Heart right ventricle (tissue), 16 donors: ENCODE measurements at regions of chr14 and their contacts with region 1.

Region 1: DNA sequence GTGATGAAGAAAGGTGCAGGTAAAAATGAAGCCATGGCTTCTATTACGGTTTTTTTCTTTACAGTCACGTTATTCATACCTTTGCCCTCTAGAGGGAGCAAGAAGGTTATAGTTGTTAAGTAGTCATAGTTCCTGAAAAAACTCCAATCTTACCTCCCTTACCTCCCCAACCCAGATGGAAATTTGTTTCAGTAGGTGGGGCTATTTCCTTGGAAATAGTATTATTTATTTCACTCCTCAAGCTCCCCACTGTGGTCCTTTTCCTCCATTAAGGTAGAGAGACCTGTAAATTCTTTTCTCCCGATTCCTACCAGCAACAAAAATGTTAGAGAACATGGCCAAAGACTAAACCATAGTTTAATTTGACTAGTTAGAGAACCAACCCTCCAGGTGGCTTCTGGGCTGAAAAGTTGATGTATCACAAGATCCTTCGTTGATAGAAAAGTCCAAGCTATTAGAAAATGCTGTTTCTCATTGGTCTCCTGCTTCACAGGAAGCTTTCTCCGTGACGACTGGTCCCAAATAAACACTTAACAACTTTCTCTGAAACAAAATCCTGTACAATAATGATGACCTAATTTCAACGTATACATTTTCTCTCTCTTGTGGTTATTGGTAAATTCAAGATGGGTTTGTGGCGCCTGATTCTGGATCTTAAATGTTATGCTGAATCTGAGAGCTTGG is 43.5 kb downstream of the TMX1 start:
- DNase-seq: peak in 1 of 2 donors; percentile 36
- ATAC-seq: peak in 7 of 8 donors; percentile 85 to 90 (median 87)
- H3K4me3 ChIP-seq: no peak overlapping the region
- H3K27ac ChIP-seq: no peak overlapping the region
- H3K4me1 ChIP-seq: no peaks in the 10 kb centered on the region
- H3K27me3 ChIP-seq: no peaks in the 10 kb centered on the region
- CTCF ChIP-seq: peak; percentile 50 to 92 (median 85)

Region 2: GRCh38 chr14:51328064-51328771 is 44.7 kb after region 1 on chr14:
- intact Hi-C with region 1: no loop called
- DNase-seq: peak; percentile 25 to 30
- ATAC-seq: peak in 7 of 8 donors; percentile 52 to 89 (median 58)
- H3K4me3 ChIP-seq: no peak overlapping the region
- H3K27ac ChIP-seq: peak overlapping the region in 9 of 10 donors; percentile 46 to 74 (median 57)
- H3K4me1 ChIP-seq: peaks cover 10 to 25% (median 17%) of the 10 kb centered on the region in 9 donors
- H3K27me3 ChIP-seq: no peaks in the 10 kb centered on the region
- CTCF ChIP-seq: no peak

Region 3: DNA sequence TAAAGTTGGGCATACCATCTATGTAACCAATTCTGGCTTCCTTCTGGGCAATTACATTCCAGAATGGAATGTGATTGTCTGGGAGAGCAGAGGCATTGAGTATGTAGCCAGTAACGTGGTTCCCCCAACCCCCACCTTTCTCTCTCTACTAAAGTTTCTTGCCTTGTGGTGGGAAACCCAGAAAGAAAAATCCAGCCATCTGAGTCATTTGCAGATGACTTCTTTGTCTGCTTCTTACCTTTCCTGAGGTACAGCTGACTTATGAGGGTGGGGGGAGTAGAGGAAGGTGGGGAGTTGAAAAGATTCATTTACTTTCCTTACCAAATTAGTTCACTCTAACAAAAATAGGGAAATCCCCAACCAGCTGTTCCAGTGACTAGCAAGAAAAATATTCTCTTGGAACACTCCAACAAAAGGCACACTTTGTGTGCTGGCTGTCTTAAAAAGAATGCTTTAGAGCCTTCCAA is 256.1 kb after region 1 on chr14:
- intact Hi-C with region 1: loop called in 1 of 10 experiments (anchors 10 kb)
- DNase-seq: no peak
- ATAC-seq: no peak
- H3K4me3 ChIP-seq: no peak overlapping the region
- H3K27ac ChIP-seq: no peak overlapping the region
- H3K4me1 ChIP-seq: peaks cover 0 to 6% (median 0%) of the 10 kb centered on the region in 9 donors
- H3K27me3 ChIP-seq: no peaks in the 10 kb centered on the region
- CTCF ChIP-seq: no peak

Region 4: DNA sequence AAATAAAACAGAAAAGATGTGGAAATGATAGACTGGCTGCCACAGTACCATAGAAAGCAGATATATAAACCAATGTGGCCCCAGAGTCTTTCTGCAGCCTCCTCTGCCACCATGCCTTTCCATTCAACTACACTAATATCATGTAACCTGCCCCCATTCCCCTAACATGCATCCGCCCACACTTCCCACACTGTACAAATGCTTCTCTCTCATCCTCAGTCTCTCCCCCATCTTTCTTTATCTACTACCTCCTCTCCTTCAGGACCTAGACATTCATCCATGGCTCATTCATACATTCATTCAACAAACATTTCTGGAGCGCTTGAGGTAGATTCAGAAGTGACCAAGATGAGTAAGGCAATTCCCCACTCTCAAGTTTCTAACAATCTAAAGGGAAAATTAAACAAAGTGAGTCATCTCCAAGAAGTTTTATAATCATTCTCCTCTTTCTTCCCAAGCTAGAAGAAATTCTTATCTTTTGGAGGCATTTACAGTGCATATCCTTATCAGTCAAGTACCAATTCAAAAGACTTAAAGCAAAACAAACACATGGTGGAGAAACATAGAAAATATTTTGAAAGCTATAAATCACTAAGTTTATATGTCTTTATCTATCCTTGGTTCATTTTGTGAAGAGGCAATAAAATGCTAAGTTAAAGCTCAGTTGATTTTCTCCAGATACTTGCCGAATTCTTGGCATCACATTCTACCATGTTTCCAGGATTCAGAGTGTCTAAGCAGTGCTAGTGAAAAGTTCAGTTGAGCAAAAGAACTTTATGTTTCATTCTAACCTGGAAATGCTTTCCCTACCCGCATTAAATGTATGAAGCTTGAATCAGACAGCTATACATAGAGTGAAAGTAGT is 297.7 kb after region 1 on chr14:
- intact Hi-C with region 1: loop called in 1 of 10 experiments (anchors 10 kb)
- DNase-seq: no peak
- ATAC-seq: no peak
- H3K4me3 ChIP-seq: no peak overlapping the region
- H3K27ac ChIP-seq: no peak overlapping the region
- H3K4me1 ChIP-seq: no peaks in the 10 kb centered on the region
- H3K27me3 ChIP-seq: no peaks in the 10 kb centered on the region
- CTCF ChIP-seq: no peak

Region 5: GRCh38 chr14:51780006-51780692 is 496.6 kb after region 1 on chr14:
- intact Hi-C with region 1: loop called (anchors 1 to 2 kb)
- DNase-seq: peak; percentile 37 to 69
- ATAC-seq: peak; percentile 54 to 81 (median 68)
- H3K4me3 ChIP-seq: no peak overlapping the region
- H3K27ac ChIP-seq: no peak overlapping the region
- H3K4me1 ChIP-seq: peaks cover 0 to 19% (median 7%) of the 10 kb centered on the region in 9 donors
- H3K27me3 ChIP-seq: peaks cover 0 to 6% (median 0%) of the 10 kb centered on the region in 7 donors
- CTCF ChIP-seq: peak; percentile 74 to 89 (median 87)

Region 6: DNA sequence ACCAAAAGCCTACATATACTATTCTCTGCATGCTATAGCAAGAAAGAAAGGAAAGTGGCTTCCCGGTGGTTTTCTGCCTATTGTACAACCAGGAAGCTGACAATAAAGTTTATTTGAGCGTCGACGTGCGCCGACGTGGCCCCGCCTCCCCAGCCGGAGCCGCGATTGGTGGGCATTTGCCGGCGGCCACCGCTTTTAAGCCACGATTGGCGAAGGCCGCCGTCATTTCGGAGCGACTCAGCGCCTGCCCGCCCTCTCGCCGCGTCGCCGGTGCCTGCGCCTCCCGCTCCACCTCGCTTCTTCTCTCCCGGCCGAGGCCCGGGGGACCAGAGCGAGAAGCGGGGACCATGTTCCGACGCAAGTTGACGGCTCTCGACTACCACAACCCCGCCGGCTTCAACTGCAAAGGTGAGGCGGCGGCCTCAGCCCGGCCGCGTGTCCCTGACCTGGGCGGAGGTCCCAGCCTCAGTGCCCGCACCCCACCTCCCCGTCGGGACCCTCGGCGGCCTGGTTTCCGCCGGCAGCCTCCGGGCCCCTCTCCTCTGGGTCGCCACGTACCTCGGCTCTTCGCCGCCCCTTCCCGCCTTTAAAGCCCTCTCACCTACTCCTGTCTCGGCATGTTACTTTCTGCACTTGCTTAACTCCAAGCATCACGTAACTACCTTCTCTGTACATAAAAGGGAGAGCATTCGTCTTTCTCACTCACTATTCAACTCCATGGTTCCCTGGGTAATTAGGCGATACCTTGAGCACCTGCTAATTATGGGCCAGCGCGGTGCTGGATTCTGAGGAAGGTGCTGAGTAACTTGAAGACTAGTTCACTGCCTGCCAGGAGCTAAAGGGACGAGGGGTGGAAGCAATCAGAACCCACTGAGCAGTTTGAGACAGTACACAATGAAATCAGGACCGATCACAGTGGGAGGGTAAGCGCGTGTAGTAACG is 706.0 kb after region 1 on chr14 and contains the start of gene RTRAF:
- intact Hi-C with region 1: loop called in 2 of 10 experiments (anchors 5 to 10 kb)
- DNase-seq: peak; percentile 95
- ATAC-seq: peak; percentile 98 to 100 (median 99)
- H3K4me3 ChIP-seq: peak within 1 kb of the TSS; percentile 80 to 96 (median 93)
- H3K27ac ChIP-seq: peak within 1 kb of the TSS; percentile 82 to 96 (median 91)
- H3K4me1 ChIP-seq: peaks cover 0 to 53% (median 46%) of the 10 kb centered on the region in 9 donors
- H3K27me3 ChIP-seq: no peaks in the 10 kb centered on the region
- CTCF ChIP-seq: no peak
- total RNA-seq, gene RTRAF: 181 to 258 (median 214) TPM

Region 7: GRCh38 chr14:52146504-52146903 is 863.0 kb after region 1 on chr14:
- intact Hi-C with region 1: no loop called
- DNase-seq: no peak
- ATAC-seq: no peak
- H3K4me3 ChIP-seq: no peak overlapping the region
- H3K27ac ChIP-seq: no peak overlapping the region
- H3K4me1 ChIP-seq: no peaks in the 10 kb centered on the region
- H3K27me3 ChIP-seq: no peaks in the 10 kb centered on the region
- CTCF ChIP-seq: peak in 3 of 9 donors; percentile 11 to 46 (median 19)